ENCODE measurements at regions of chr20 and their contacts with region 1.

Region 1: GRCh38 chr20:61734733-61735502 is 330.8 kb downstream of the TAF4 start:
- DNase-seq: no peak
- H3K4me3 ChIP-seq: no peak overlapping the region
- H3K27ac ChIP-seq: no peak overlapping the region
- H3K4me1 ChIP-seq: no peaks in the 10 kb centered on the region
- H3K27me3 ChIP-seq: peaks cover 0 to 3% (median 1%) of the 10 kb centered on the region in 4 experiments; a peak in 2 of 7 replicates
- CTCF ChIP-seq: no peak
- EP300 ChIP-seq: no peak
- POLR2A ChIP-seq: no peak
- RAD21 ChIP-seq: no peak

Region 2: GRCh38 chr20:61055180-61056010 is 679.5 kb before region 1 on chr20:
- CTCF ChIA-PET with region 1: no interaction called
- POLR2A ChIA-PET with region 1: no interaction called
- DNase-seq: no peak
- H3K4me3 ChIP-seq: no peak overlapping the region
- H3K27ac ChIP-seq: no peak overlapping the region
- H3K4me1 ChIP-seq: no peaks in the 10 kb centered on the region
- H3K27me3 ChIP-seq: peaks cover 3 to 13% (median 7%) of the 10 kb centered on the region in 4 experiments
- CTCF ChIP-seq: no peak
- EP300 ChIP-seq: no peak
- POLR2A ChIP-seq: no peak
- RAD21 ChIP-seq: no peak

Region 3: DNA sequence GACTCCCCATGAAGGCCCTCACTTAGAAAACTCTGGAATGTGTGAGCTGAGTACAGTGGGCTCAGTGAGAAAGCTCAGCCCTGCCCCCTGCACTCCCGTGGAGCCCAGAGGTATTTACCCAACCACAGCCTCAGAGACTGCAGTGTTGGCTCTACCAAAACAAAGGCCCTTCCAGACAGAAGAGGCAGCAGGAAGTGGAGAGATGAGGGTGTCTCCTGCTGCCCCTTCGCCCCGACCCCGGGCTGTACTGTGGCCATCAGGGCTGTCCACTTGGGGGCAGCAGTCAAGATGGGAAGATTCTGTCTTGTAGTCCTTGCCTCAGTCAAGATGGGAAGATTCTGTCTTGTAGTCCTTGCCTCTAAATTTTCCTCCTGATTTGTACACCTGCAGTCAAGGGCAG is 10.5 kb before region 1 on chr20:
- CTCF ChIA-PET with region 1: interaction called, 11 read pairs
- POLR2A ChIA-PET with region 1: no interaction called
- DNase-seq: peak; percentile 7 to 70
- H3K4me3 ChIP-seq: no peak overlapping the region
- H3K27ac ChIP-seq: no peak overlapping the region
- H3K4me1 ChIP-seq: peaks cover 7 to 10% (median 9%) of the 10 kb centered on the region in 4 experiments
- H3K27me3 ChIP-seq: peaks cover 0 to 6% (median 0%) of the 10 kb centered on the region in 4 experiments; a peak in 4 of 7 replicates
- CTCF ChIP-seq: peak; percentile 62 to 77 (median 76)
- EP300 ChIP-seq: no peak
- POLR2A ChIP-seq: no peak
- RAD21 ChIP-seq: peak; percentile 39 to 67; a peak in 3 of 4 replicates

Measured in H1 (cell line).